B cell (primary cell): ENCODE measurements at regions of chr1 and their contacts with region 1.

Region 1: DNA sequence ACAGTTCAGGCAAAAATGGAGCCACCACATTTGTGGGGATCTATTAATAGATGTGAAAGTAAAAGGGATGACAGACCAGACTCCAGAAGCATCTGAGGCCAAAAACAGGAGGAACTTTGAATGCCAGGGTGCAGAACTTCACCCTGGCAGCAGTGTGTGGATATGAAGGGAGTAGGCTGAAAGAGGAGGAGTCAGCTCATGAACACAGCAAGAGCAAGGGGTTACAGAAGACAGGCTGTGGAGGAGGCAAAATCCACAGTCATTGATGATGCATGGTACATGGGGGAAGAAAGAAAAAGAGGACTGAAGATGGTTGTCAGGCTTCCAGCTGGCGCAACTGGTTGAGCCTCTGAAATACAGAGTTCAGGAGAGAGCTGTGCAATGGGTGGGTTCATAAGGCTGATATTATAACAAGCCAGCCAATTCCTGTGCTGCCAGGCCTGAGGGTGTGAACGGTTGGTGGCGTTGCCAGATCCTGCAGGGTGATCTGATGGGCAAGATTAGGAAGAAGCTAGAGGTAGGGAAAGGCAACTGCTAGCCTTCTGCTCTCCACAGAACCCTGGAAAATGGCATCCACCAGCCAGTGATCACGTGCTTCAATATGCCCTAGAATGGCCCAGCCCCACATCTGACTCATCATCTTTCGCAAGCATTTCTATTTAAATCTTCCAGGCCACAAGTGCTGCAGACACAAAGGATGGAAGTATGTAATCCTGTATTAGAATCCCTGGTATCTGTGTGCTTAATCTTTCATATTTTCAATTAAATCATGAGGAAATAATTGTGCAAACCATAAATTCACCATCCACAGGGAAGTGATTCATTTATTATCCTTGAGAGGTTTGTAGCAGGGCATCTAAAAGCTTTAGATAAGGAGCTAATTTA is 81.9 kb downstream of the SLC25A24 start:
- DNase-seq: no peak
- ATAC-seq: no peak
- H3K4me3 ChIP-seq: no peak overlapping the region
- H3K4me3 Mint-ChIP-seq: no peak overlapping the region
- H3K27ac ChIP-seq: no peak overlapping the region
- H3K27ac Mint-ChIP-seq: no peak overlapping the region
- H3K4me1 ChIP-seq: peaks cover 14 to 17% of the 10 kb centered on the region in 2 donors
- H3K4me1 Mint-ChIP-seq: peaks cover 20% of the 10 kb centered on the region
- H3K27me3 ChIP-seq: no peaks in the 10 kb centered on the region
- H3K27me3 Mint-ChIP-seq: peaks cover 11% of the 10 kb centered on the region
- CTCF ChIP-seq: no peak

Region 2: GRCh38 chr1:107991371-107992066 is 126.7 kb before region 1 on chr1:
- CTCF ChIA-PET with region 1: no interaction called
- POLR2A ChIA-PET with region 1: no interaction called
- intact Hi-C with region 1: no loop called
- DNase-seq: no peak
- ATAC-seq: no peak
- H3K4me3 ChIP-seq: no peak overlapping the region
- H3K4me3 Mint-ChIP-seq: no peak overlapping the region
- H3K27ac ChIP-seq: no peak overlapping the region
- H3K27ac Mint-ChIP-seq: no peak overlapping the region
- H3K4me1 ChIP-seq: no peaks in the 10 kb centered on the region
- H3K4me1 Mint-ChIP-seq: no peaks in the 10 kb centered on the region
- H3K27me3 ChIP-seq: no peaks in the 10 kb centered on the region
- H3K27me3 Mint-ChIP-seq: no peaks in the 10 kb centered on the region
- CTCF ChIP-seq: no peak

Region 3: DNA sequence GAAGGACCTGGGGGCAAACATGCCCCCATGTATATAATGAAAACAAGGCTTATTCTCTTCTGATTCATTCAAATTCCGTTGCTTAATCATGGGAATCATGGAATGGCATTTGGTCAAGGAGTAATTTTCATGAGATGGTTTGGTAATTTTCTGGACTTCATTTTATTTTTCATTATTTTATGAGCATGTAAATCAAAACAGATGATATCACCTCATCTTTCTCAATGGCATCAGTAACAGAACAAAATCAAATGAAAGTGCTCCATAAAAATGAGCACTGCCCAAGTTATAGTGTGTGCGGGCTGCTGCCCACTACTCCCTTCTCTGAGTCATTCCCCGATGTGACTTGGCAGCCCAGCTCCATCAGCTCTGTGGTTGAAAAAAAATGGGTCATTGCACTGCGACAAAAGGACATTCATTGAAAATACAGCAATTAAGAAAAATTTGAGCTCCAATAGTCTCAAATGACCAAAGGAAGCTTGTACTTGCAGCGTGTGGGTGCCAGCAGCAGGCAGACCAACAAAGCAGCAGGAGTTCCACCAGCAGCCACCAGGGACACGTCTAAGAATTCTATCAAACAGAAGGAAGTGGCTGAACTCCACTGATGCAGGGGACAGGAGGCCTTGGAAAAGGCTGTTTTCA is 69.0 kb before region 1 on chr1:
- CTCF ChIA-PET with region 1: no interaction called
- POLR2A ChIA-PET with region 1: no interaction called
- intact Hi-C with region 1: loop called (anchors 2 kb)
- DNase-seq: peak; percentile 52
- ATAC-seq: peak; percentile 60
- H3K4me3 ChIP-seq: no peak overlapping the region
- H3K4me3 Mint-ChIP-seq: no peak overlapping the region
- H3K27ac ChIP-seq: no peak overlapping the region
- H3K27ac Mint-ChIP-seq: no peak overlapping the region
- H3K4me1 ChIP-seq: peaks cover 27 to 35% of the 10 kb centered on the region in 2 donors
- H3K4me1 Mint-ChIP-seq: peaks cover 28% of the 10 kb centered on the region
- H3K27me3 ChIP-seq: no peaks in the 10 kb centered on the region
- H3K27me3 Mint-ChIP-seq: no peaks in the 10 kb centered on the region
- CTCF ChIP-seq: peak; percentile 72